AG04449 (cell line): ENCODE measurements at regions of chr11 and their contacts with region 1.

Region 1: DNA sequence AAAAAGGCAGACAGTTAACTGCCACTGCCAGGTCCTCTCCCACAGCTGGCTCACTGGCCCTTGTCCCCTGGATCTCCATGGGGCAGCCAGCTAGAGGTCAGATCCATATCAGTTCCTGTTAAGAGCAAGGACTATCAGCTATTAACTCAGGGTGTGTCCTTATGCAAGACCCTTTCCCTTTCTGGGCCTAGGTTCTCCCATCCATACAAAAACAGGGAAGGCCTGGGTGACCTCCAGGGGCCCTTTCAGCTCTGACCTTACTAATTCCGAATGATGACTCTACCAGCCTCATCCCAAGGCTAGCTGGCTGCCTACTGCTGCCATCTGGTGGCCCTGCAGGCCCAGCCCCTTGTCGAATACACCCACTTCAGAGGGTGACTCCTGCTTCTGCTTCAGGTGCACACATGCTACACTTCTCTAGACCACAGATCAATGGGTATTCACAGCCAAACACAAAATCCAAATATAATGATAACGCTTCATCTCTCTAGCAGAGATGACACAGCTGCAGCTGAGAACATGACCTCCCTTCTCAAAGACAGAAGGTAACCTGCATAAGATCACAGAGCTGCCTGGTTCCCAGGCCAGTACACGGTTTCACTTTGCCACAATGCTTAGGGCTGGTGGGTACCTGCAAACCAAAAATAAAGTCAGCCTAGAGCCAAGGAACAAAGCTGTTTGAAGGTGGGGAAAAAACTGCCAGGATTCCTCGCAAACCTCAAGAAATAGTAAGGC is 34.1 kb downstream of the SERGEF start:
- DNase-seq: no peak
- H3K4me3 ChIP-seq: no peak overlapping the region
- CTCF ChIP-seq: peak; percentile 86

Region 2: DNA sequence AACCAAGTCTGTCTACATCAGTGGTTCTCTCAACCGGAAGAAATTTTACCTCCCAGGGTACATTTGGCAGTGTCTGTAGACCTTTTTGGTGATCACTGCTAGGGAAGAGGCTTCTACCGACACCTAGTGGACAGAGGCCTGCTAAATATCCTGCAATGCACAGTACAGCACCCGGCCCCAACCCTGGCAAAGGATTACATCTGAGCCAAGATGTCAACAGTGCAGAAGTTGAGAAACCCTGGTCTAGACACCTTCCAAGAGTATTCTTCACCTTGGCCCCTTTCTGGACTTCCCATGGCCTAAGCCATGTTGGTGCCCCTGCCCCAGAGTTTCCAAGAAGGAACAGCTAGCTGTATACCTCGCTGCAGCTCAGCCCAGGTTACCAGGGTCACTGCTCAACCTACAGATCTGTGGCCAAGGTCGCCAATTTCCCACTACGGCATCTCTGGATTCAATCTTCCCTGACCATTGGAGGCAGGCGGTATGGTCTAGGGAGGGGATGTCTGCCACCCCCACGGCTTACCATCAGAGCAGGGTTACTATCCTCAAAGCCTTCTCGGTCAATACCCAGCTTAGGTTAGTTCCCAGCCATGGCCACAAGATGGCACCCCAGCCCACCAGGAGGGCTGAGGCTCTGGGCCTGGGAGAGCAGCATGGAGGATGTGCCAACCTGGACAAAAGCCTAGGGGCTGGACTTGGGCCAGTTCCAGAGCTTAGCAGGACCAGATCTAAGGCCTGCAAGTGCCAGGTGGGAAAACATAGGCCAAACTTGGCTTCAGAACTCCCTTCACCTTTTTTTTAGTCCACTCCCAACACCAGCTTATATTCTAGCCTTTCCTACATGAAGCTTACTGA is 247.9 kb before region 1 on chr11:
- CTCF ChIA-PET with region 1: interaction called, 570 read pairs
- POLR2A ChIA-PET with region 1: interaction called, 5 read pairs
- DNase-seq: peak; percentile 7
- H3K4me3 ChIP-seq: no peak overlapping the region
- CTCF ChIP-seq: peak; percentile 93

Region 3: GRCh38 chr11:17770048-17770652 is 208.6 kb before region 1 on chr11:
- CTCF ChIA-PET with region 1: interaction called, 53 read pairs
- POLR2A ChIA-PET with region 1: no interaction called
- DNase-seq: no peak
- H3K4me3 ChIP-seq: no peak overlapping the region
- CTCF ChIP-seq: no peak

Region 4: DNA sequence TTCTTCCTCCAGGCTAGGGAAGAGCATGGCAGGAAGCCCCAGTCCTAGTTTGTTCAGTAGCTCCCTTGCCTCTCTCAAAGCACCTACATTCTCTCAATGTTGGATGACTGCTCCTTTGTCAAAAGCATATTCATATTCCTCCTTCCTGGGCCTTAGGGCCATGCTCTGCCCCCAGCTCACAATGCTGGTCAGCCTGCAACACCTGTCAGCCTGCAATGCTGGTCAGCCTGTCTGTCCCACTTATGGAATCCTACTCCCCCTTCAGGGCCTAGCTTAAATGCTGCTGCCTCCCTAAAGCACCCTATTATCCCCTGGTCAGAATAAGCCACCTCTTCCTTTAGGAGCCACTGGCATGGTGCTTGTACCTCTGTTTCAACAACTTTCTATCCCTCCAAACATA is 11.1 kb before region 1 on chr11:
- CTCF ChIA-PET with region 1: interaction called, 72 read pairs
- POLR2A ChIA-PET with region 1: no interaction called
- DNase-seq: no peak
- H3K4me3 ChIP-seq: no peak overlapping the region
- CTCF ChIP-seq: no peak

Region 5: DNA sequence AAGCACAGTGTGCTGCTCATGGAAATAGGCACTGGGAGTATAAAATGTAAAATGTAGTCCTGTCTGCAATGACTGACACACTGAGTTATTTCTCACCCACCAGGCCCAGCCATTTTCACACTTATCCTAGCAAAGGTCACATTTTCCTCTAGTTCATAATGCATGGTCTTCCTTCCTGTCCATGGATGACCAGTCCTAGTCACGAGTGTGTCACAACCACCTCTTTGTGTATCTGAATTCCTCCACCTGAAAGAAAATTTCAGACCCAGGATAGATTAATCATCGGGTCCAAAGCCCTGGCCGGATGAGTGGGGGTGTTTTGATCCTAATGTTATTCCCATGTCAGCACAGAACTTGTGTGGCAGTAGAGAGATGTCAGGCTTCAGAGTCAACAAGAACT is 193.9 kb after region 1 on chr11 and contains the start of gene MRGPRX4:
- CTCF ChIA-PET with region 1: no interaction called
- POLR2A ChIA-PET with region 1: no interaction called
- DNase-seq: no peak
- H3K4me3 ChIP-seq: no peak within 1 kb of the TSS
- CTCF ChIP-seq: no peak